Activated CD4-positive, alpha-beta T cell treated with anti-CD3 and anti-CD28 coated beads for 36 hours (primary cell): ENCODE measurements at regions of chr4 and their contacts with region 1.

Region 1: DNA sequence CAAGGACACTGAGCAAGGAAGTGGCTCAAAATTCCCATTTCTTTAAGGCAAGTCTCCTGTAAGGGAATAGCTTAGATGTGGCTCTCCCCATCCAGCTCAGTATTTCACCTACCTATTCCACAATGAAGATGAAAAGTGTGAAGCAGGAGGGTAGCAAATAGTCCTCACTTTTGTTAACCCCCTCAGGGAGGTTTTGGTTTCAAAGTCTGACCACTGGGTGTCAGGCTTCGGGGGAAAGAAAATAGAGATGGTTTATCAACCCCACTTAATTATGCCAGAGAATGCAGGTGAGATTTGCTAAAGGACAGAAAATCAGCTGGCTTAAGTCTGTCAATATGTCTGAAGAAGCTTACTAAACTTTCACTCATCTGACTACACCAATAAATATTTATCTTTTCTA is 69.6 kb downstream of the DHX15 start:
- DNase-seq: no peak
- ATAC-seq: no peak
- H3K4me3 Mint-ChIP-seq: no peak overlapping the region
- H3K27ac Mint-ChIP-seq: no peak overlapping the region
- H3K4me1 Mint-ChIP-seq: peaks cover 20% of the 10 kb centered on the region
- H3K27me3 Mint-ChIP-seq: no peaks in the 10 kb centered on the region

Region 2: GRCh38 chr4:24497221-24497620 is 17.6 kb before region 1 on chr4:
- CTCF ChIA-PET with region 1: no interaction called
- POLR2A ChIA-PET with region 1: no interaction called
- intact Hi-C with region 1: no loop called
- DNase-seq: no peak
- ATAC-seq: no peak
- H3K4me3 Mint-ChIP-seq: no peak overlapping the region
- H3K27ac Mint-ChIP-seq: no peak overlapping the region
- H3K4me1 Mint-ChIP-seq: no peaks in the 10 kb centered on the region
- H3K27me3 Mint-ChIP-seq: peaks cover 2% of the 10 kb centered on the region

Region 3: GRCh38 chr4:24557026-24558025 is 42.5 kb after region 1 on chr4:
- CTCF ChIA-PET with region 1: no interaction called
- POLR2A ChIA-PET with region 1: no interaction called
- intact Hi-C with region 1: loop called in 1 of 2 experiments (anchors 5 kb)
- DNase-seq: no peak
- ATAC-seq: peak; percentile 85
- H3K4me3 Mint-ChIP-seq: peak overlapping the region; percentile 23
- H3K27ac Mint-ChIP-seq: peak overlapping the region; percentile 81
- H3K4me1 Mint-ChIP-seq: peaks cover 66% of the 10 kb centered on the region
- H3K27me3 Mint-ChIP-seq: no peaks in the 10 kb centered on the region

Region 4: GRCh38 chr4:24578364-24578763 is 63.6 kb after region 1 on chr4:
- CTCF ChIA-PET with region 1: no interaction called
- POLR2A ChIA-PET with region 1: no interaction called
- intact Hi-C with region 1: loop called (anchors 2 to 5 kb)
- DNase-seq: no peak
- ATAC-seq: no peak
- H3K4me3 Mint-ChIP-seq: no peak overlapping the region
- H3K27ac Mint-ChIP-seq: peak overlapping the region; percentile 52
- H3K4me1 Mint-ChIP-seq: peaks cover 75% of the 10 kb centered on the region
- H3K27me3 Mint-ChIP-seq: no peaks in the 10 kb centered on the region

Region 5: GRCh38 chr4:24657768-24658617 is 143.2 kb after region 1 on chr4:
- CTCF ChIA-PET with region 1: no interaction called
- POLR2A ChIA-PET with region 1: no interaction called
- intact Hi-C with region 1: no loop called
- DNase-seq: peak; percentile 46
- ATAC-seq: peak; percentile 64
- H3K4me3 Mint-ChIP-seq: no peak overlapping the region
- H3K27ac Mint-ChIP-seq: no peak overlapping the region
- H3K4me1 Mint-ChIP-seq: peaks cover 2% of the 10 kb centered on the region
- H3K27me3 Mint-ChIP-seq: peaks cover 14% of the 10 kb centered on the region

Region 6: GRCh38 chr4:24704149-24704548 is 189.3 kb after region 1 on chr4:
- CTCF ChIA-PET with region 1: no interaction called
- POLR2A ChIA-PET with region 1: no interaction called
- intact Hi-C with region 1: no loop called
- DNase-seq: no peak
- ATAC-seq: no peak
- H3K4me3 Mint-ChIP-seq: no peak overlapping the region
- H3K27ac Mint-ChIP-seq: no peak overlapping the region
- H3K4me1 Mint-ChIP-seq: no peaks in the 10 kb centered on the region
- H3K27me3 Mint-ChIP-seq: peaks cover 5% of the 10 kb centered on the region

Region 7: DNA sequence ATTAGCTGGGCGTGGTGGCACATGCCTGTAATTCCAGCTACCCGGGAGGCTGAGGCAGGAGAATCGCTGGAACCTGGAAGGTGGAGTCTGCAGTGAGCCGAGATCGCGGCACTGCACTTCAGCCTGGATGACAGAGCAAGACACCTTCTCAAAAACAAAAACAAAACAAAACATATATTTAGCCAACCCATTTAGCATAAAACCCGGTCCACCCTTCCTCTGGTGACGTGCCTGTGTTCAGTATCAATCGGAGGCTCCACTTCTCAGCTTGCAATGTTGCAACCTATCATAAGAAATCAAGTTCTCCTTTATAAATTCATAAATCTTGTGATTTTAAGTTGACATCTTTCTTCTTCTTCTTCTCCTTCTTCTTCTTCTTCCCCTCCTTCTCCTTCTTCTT is 1214.8 kb after region 1 on chr4:
- CTCF ChIA-PET with region 1: no interaction called
- POLR2A ChIA-PET with region 1: no interaction called
- intact Hi-C with region 1: no loop called
- DNase-seq: no peak
- ATAC-seq: no peak
- H3K4me3 Mint-ChIP-seq: no peak overlapping the region
- H3K27ac Mint-ChIP-seq: no peak overlapping the region
- H3K4me1 Mint-ChIP-seq: no peaks in the 10 kb centered on the region
- H3K27me3 Mint-ChIP-seq: no peaks in the 10 kb centered on the region